ENCODE measurements at regions of chr9 and their contacts with region 1.

Region 1: GRCh38 chr9:117644133-117644931 is 59.9 kb upstream of the TLR4 start:
- DNase-seq: peak; percentile 86
- H3K4me3 ChIP-seq: no peak overlapping the region
- H3K27ac ChIP-seq: no peak overlapping the region
- H3K4me1 ChIP-seq: peaks cover 6% of the 10 kb centered on the region
- H3K27me3 ChIP-seq: peaks cover 9 to 15% of the 10 kb centered on the region in 2 experiments
- CTCF ChIP-seq: peak; percentile 89 to 97
- POLR2A ChIP-seq: no peak

Region 2: DNA sequence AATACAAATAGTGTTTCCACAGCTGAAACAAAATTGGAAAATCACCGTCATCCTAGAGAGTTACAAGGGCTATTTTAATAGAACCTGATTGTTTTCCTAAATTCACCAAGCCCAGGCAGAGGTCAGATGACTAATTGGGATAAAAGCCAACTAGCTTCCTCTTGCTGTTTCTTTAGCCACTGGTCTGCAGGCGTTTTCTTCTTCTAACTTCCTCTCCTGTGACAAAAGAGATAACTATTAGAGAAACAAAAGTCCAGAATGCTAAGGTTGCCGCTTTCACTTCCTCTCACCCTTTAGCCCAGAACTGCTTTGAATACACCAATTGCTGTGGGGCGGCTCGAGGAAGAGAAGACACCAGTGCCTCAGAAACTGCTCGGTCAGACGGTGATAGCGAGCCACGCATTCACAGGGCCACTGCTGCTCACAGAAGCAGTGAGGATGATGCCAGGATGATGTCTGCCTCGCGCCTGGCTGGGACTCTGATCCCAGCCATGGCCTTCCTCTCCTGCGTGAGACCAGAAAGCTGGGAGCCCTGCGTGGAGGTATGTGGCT is 59.8 kb after region 1 on chr9 and contains the start of gene TLR4:
- CTCF ChIA-PET with region 1: interaction called, 3 read pairs
- POLR2A ChIA-PET with region 1: no interaction called
- dilution Hi-C with region 1: no loop called
- intact Hi-C with region 1: loop called (anchors 1 kb)
- DNase-seq: peak; percentile 99
- H3K4me3 ChIP-seq: peak within 1 kb of the TSS; percentile 52 to 99 (median 63)
- H3K27ac ChIP-seq: peak within 1 kb of the TSS; percentile 81
- H3K4me1 ChIP-seq: peaks cover 35% of the 10 kb centered on the region
- H3K27me3 ChIP-seq: no peaks in the 10 kb centered on the region
- CTCF ChIP-seq: no peak
- POLR2A ChIP-seq: peak; percentile 77
- total RNA-seq, gene TLR4: 38.6 and 41.7 TPM in 2 replicates

Region 3: GRCh38 chr9:117782931-117783788 is 138.8 kb after region 1 on chr9:
- CTCF ChIA-PET with region 1: interaction called, 8 read pairs
- POLR2A ChIA-PET with region 1: no interaction called
- dilution Hi-C with region 1: no loop called
- intact Hi-C with region 1: loop called (anchors 1 kb)
- DNase-seq: peak; percentile 83
- H3K4me3 ChIP-seq: peak overlapping the region; percentile 39 to 77 (median 52)
- H3K27ac ChIP-seq: no peak overlapping the region
- H3K4me1 ChIP-seq: peaks cover 7% of the 10 kb centered on the region
- H3K27me3 ChIP-seq: no peaks in the 10 kb centered on the region
- CTCF ChIP-seq: peak; percentile 80
- POLR2A ChIP-seq: no peak

Region 4: DNA sequence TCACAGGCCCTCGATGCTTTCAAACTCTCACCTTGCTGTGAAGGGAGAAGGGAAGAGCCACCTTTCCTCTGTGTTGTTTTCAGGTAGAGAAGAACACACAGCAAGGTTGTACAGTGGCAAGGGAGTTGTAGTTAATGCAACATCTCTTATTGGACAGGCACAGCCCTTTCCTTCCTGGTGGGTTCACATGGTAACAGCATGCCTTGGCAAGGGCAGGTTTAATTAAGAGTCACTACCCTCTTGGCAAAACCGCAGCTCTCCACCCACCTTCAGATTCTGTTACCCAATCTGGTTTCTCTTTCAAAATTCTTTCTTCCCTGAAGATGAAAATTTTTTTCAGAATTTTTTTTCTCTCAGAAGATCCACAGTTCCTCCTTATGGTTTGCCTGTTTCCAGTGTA is 312.9 kb after region 1 on chr9:
- CTCF ChIA-PET with region 1: no interaction called
- POLR2A ChIA-PET with region 1: no interaction called
- dilution Hi-C with region 1: no loop called
- intact Hi-C with region 1: loop called (anchors 10 kb)
- DNase-seq: no peak
- H3K4me3 ChIP-seq: no peak overlapping the region
- H3K27ac ChIP-seq: no peak overlapping the region
- H3K4me1 ChIP-seq: no peaks in the 10 kb centered on the region
- H3K27me3 ChIP-seq: no peaks in the 10 kb centered on the region
- CTCF ChIP-seq: no peak
- POLR2A ChIP-seq: no peak

Region 5: DNA sequence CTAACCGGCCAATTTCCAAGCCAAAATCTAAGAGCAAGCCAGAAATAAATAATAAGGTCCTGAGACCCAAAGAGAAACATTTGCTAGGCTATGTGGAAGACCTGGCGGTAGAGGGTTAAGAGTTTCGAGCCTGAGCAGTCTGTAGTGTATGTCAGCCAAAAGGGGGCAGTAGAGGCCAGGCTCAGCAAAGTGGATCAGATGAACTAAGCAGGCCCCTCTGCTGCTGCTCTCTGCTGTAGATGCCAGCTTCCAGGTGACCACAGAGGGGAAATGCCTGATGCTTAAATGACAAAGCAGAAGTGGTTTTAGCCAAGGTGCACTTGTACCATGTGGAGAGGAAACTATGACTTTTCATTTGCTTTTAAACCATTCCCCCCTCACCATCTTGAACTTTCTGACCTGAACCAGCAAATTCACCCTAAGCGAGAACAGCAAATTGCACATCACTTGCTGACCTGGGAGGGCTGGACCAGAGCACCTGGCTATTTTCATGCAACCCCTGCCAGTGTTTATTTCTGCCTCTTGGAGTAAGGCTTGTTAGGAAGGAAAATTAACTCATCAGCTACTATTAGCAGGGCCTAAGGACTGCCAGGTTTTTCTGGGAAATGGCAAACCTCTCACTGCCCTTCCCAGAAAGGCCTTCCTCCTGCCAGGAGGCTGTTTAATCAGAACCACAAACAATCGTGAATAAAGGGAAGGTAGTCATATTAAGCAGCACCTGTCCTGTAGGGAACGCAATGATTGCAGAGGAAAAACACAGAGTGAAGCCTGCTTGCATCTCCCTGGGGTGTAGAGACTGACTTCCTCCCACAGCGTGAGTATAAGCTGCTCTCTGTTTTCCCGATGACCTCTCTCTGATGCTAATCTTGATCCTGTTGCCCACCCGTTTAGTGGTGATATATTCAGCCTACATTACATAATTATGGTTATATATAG is 878.0 kb after region 1 on chr9:
- CTCF ChIA-PET with region 1: interaction called, 4 read pairs
- POLR2A ChIA-PET with region 1: no interaction called
- dilution Hi-C with region 1: no loop called
- intact Hi-C with region 1: loop called (anchors 1 kb)
- DNase-seq: peak; percentile 79
- H3K4me3 ChIP-seq: no peak overlapping the region
- H3K27ac ChIP-seq: no peak overlapping the region
- H3K4me1 ChIP-seq: no peaks in the 10 kb centered on the region
- H3K27me3 ChIP-seq: peaks cover 0 to 2% of the 10 kb centered on the region in 2 experiments
- CTCF ChIP-seq: peak; percentile 72 to 89
- POLR2A ChIP-seq: no peak

Region 6: DNA sequence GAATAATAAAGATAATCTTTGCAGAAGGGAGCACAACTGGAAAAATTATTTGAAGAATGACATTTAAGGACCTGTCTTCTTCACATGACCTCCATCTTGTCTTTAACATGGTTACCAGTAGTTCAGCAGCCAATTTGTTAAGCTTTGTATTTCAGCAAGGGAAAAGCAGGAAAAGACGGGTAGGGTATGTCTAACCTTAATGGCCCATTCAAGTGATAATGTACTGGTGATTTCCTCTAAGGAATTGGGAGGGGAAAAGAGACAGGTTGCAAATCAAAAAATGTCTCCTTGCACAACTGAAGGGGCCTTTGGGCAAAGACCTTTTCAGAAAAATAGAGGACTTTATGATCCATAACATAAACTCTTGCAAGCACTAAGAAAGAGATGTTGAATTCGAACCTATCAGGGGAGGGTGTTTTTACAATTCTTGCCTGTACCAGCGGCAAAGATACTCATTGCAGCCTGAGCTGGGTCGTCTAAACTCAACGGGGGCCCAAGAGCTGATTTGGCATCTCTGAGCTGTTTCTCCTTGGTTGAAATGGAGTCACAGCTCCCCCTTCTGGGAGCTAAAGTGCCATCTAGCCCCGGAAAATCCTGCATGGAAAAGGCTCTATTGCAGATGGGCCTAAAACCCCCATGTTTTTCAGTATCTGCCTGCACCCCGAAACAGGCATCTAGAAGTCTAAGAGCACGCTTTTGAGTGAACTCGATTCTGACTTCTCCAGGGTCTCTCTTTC is 1721.1 kb after region 1 on chr9:
- CTCF ChIA-PET with region 1: interaction called, 5 read pairs
- POLR2A ChIA-PET with region 1: no interaction called
- dilution Hi-C with region 1: no loop called
- intact Hi-C with region 1: loop called (anchors 1 kb)
- DNase-seq: peak; percentile 17
- H3K4me3 ChIP-seq: no peak overlapping the region
- H3K27ac ChIP-seq: no peak overlapping the region
- H3K4me1 ChIP-seq: no peaks in the 10 kb centered on the region
- H3K27me3 ChIP-seq: peaks cover 0 to 16% of the 10 kb centered on the region in 2 experiments
- CTCF ChIP-seq: peak; percentile 32 to 40
- POLR2A ChIP-seq: no peak

Measured in endothelial cell of umbilical vein (primary cell).